ENCODE measurements at regions of chr16 and their contacts with region 1.

Region 1: GRCh38 chr16:11370084-11370931 is 25.0 kb downstream of the RMI2 start:
- DNase-seq: peak; percentile 53
- ATAC-seq: peak; percentile 96
- H3K4me3 Mint-ChIP-seq: peak overlapping the region; percentile 69
- H3K27ac Mint-ChIP-seq: peak overlapping the region; percentile 80
- H3K4me1 Mint-ChIP-seq: peaks cover 40% of the 10 kb centered on the region
- H3K27me3 Mint-ChIP-seq: no peaks in the 10 kb centered on the region
- CTCF ChIP-seq: no peak

Region 2: GRCh38 chr16:11181899-11182279 is 188.4 kb before region 1 on chr16:
- CTCF ChIA-PET with region 1: no interaction called
- POLR2A ChIA-PET with region 1: interaction called, 10 read pairs
- intact Hi-C with region 1: no loop called
- DNase-seq: no peak
- ATAC-seq: peak; percentile 35
- H3K4me3 Mint-ChIP-seq: peak overlapping the region; percentile 64
- H3K27ac Mint-ChIP-seq: peak overlapping the region; percentile 87
- H3K4me1 Mint-ChIP-seq: peaks cover 58% of the 10 kb centered on the region
- H3K27me3 Mint-ChIP-seq: no peaks in the 10 kb centered on the region
- CTCF ChIP-seq: no peak

Region 3: GRCh38 chr16:11198817-11199216 is 171.5 kb before region 1 on chr16:
- CTCF ChIA-PET with region 1: no interaction called
- POLR2A ChIA-PET with region 1: no interaction called
- intact Hi-C with region 1: no loop called
- DNase-seq: no peak
- ATAC-seq: no peak
- H3K4me3 Mint-ChIP-seq: no peak overlapping the region
- H3K27ac Mint-ChIP-seq: no peak overlapping the region
- H3K4me1 Mint-ChIP-seq: peaks cover 29% of the 10 kb centered on the region
- H3K27me3 Mint-ChIP-seq: peaks cover 7% of the 10 kb centered on the region
- CTCF ChIP-seq: no peak

Region 4: DNA sequence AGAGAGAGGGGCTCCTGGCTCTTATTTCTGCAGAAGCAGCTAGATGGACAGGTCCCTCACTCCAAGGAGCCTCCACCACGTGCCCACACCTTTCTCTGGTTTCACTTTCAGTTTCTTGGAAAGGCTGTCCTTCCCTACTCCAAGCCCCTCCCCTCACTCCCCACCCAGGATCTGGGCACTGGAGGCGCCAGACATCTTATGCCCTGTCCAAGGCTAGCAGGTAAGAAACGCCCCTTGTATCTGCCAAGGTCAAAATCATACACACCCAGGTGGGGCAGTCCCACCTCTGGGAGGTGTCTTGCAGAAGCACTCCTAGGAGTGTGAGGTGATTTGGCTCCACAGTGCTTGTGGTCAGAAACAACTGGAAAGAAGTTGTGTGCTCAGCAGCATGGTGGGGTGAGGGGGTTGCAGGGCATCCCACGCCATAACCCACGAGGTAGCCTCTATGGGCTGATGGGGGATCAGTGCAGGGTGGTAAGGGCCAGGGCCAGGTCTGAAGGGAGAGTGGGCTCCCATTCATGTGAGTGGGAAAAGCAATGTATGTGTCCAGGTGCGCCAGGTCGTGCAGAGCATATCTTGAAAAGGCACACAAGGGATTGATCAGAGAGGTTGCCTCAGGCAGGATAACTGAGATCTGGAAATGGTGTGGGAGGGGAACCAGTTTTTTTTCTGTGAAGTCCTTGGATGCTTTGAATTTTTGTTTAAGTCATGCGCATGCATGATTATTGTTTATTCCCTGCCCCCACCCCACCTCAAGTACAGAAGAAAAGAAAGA is 57.4 kb before region 1 on chr16:
- CTCF ChIA-PET with region 1: no interaction called
- POLR2A ChIA-PET with region 1: interaction called, 11 read pairs
- intact Hi-C with region 1: loop called (anchors 2 kb)
- DNase-seq: no peak
- ATAC-seq: no peak
- H3K4me3 Mint-ChIP-seq: no peak overlapping the region
- H3K27ac Mint-ChIP-seq: peak overlapping the region; percentile 47
- H3K4me1 Mint-ChIP-seq: peaks cover 74% of the 10 kb centered on the region
- H3K27me3 Mint-ChIP-seq: no peaks in the 10 kb centered on the region
- CTCF ChIP-seq: no peak

Region 5: GRCh38 chr16:11328172-11329070 is 41.9 kb before region 1 on chr16:
- CTCF ChIA-PET with region 1: no interaction called
- POLR2A ChIA-PET with region 1: interaction called, 7 read pairs
- intact Hi-C with region 1: loop called (anchors 1 kb)
- DNase-seq: peak; percentile 66
- ATAC-seq: peak; percentile 65
- H3K4me3 Mint-ChIP-seq: peak overlapping the region; percentile 80
- H3K27ac Mint-ChIP-seq: peak overlapping the region; percentile 94
- H3K4me1 Mint-ChIP-seq: peaks cover 72% of the 10 kb centered on the region
- H3K27me3 Mint-ChIP-seq: no peaks in the 10 kb centered on the region
- CTCF ChIP-seq: no peak

Region 6: DNA sequence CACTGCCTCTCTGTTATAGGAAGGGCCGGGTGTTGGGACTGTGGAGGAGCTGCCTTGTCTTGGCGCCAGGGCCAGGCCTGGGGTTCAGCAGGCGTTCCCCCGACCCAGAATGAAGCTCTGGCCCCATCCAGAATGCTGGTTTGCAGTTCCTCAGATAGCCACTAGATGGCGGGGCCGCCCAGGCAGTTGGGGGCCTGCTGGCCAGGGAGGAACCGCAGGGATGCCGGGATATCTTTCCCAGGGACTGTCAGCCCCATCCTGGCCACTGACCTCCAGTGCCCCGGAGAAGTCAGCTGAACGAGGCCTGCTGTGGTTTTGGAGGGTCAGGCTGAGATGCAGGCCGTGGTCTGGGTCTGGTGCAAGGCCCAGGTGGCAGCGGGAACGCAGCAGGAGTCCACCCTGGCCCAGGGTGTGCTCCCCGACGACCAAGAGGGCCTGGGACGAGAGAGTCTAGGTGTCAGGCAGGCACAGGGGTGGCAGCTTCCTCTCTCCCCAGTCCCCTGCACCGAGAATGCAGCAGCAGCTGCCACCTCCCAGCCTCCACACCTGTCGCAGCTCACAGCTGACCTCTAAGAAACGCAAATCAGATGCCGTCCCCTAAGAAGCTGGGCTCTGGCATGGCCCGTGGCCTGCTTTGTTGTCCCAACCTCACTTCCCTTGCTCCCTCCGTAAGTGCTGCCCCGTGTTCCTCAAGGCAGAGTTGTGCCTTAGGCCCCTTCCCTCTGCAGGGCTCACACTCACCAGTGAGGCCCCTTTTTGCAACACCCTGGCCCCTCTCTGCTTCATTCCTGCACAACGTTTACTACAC is 26.1 kb after region 1 on chr16:
- CTCF ChIA-PET with region 1: interaction called, 12 read pairs
- POLR2A ChIA-PET with region 1: interaction called, 5 read pairs
- intact Hi-C with region 1: no loop called
- DNase-seq: peak; percentile 63
- ATAC-seq: peak; percentile 81
- H3K4me3 Mint-ChIP-seq: no peak overlapping the region
- H3K27ac Mint-ChIP-seq: no peak overlapping the region
- H3K4me1 Mint-ChIP-seq: peaks cover 4% of the 10 kb centered on the region
- H3K27me3 Mint-ChIP-seq: no peaks in the 10 kb centered on the region
- CTCF ChIP-seq: peak; percentile 90

Measured in activated B cell treated with CpG ODN at 0.5 μM for 24 hours (primary cell).